PC-9 (cell line): ENCODE measurements at regions of chr4 and their contacts with region 1.

Region 1: DNA sequence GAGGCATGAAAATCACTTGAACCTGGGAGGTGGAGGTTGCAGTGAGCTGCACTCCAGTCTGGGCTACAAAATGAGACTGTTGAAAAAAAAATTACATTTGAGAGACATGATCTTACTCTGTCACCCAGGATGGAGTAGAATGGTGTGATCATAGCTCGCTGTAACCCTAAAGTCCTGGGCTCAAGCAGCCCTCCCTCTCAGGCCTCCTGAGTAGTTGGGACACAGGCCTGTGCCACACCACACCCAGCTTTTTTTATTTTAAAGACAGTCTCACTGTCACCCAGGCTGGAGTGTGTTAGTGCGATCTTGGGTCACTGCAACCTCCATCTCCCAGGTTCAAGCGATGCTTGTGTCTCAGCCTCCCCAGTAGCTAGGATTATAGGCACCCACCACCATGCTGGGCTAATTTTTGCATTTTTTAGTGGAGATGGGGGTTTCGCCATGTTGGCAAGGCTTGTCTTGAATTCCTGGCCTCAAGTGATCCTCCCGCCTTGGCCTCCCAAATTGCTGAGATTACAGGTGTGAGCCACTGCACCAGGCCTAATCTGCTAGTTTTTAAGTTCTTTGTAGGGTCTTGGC is 6.1 kb downstream of the RPS3A start:
- DNase-seq: no peak
- H3K4me3 ChIP-seq: no peak overlapping the region
- H3K27ac ChIP-seq: no peak overlapping the region
- H3K4me1 ChIP-seq: peaks cover 9% of the 10 kb centered on the region; the same call in 1 of the 2 replicates
- H3K27me3 ChIP-seq: no peaks in the 10 kb centered on the region
- CTCF ChIP-seq: no peak

Region 2: DNA sequence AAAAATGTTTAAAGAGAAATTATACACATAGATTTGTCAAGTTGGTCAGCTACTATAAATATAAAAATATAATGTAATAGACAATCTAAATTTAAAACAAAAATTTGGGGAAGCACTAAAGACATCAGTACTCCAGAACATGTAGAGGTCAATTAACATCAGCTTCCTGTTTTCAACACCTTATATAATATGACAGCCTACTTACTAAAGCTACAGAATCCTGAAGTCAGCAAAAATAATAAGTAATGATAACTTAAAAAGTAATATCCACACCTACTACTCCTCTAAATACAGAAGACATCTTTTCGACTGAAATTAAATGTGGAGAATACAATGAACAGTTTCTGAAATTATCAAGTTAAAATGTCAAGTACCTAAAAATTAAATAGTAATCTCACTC is 209.0 kb before region 1 on chr4:
- CTCF ChIA-PET with region 1: no interaction called
- POLR2A ChIA-PET with region 1: interaction called, 15 read pairs
- intact Hi-C with region 1: no loop called
- DNase-seq: no peak
- H3K4me3 ChIP-seq: no peak overlapping the region
- H3K27ac ChIP-seq: no peak overlapping the region
- H3K4me1 ChIP-seq: no peaks in the 10 kb centered on the region
- H3K27me3 ChIP-seq: no peaks in the 10 kb centered on the region
- CTCF ChIP-seq: no peak

Region 3: GRCh38 chr4:151331276-151332042 is 225.9 kb after region 1 on chr4:
- CTCF ChIA-PET with region 1: no interaction called
- POLR2A ChIA-PET with region 1: interaction called, 10 read pairs
- intact Hi-C with region 1: no loop called
- DNase-seq: peak in 1 of 2 experiments; percentile 21
- H3K4me3 ChIP-seq: no peak overlapping the region
- H3K27ac ChIP-seq: no peak overlapping the region
- H3K4me1 ChIP-seq: peaks cover 15% of the 10 kb centered on the region
- H3K27me3 ChIP-seq: no peaks in the 10 kb centered on the region
- CTCF ChIP-seq: no peak

Region 4: DNA sequence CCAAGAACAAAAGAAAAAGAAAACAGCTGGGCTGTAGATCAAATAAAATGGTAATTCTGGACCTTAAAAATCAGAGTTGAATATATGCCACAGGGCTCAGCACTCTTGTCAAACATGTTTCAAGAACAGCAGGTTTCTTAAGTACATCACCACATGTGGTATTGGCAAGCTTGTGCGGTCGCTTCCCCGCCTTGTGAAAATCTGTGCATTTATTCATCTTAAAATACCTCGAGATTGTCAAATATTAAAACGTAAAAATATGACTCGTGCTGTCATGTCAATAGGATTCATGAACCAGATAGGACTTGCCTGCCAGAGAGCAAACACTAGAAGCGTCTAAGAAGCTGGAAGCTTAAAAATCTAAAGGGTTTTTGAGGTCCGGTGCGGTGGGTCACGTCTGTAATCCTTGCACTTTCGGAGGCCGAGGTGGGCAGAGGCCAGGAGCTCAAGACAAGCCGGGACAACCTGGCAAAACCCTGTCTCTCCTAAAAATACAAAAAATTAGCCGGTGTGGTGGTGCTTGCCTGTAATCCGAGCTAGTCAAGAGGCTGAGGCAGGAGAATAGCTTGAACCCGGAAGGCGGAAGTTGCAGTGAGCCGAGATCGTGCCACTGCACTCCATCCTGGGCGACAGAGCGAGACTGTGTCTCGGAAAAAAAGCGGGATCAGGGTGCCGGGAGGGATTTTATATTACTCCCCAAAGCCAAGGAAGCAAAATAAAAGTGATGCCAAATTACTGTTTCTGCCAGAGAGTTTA is 1614.4 kb after region 1 on chr4:
- CTCF ChIA-PET with region 1: no interaction called
- POLR2A ChIA-PET with region 1: interaction called, 11 read pairs
- intact Hi-C with region 1: no loop called
- DNase-seq: no peak
- H3K4me3 ChIP-seq: no peak overlapping the region
- H3K27ac ChIP-seq: no peak overlapping the region
- H3K4me1 ChIP-seq: no peaks in the 10 kb centered on the region
- H3K27me3 ChIP-seq: no peaks in the 10 kb centered on the region
- CTCF ChIP-seq: no peak